GM12878 (cell line): ENCODE measurements at regions of chr4 and their contacts with region 1.

Region 1: GRCh38 chr4:39319678-39320077 is 46.5 kb downstream of the RFC1 start:
- DNase-seq: no peak
- ATAC-seq: no peak
- H3K4me3 ChIP-seq: no peak overlapping the region
- H3K27ac ChIP-seq: no peak overlapping the region
- H3K4me1 ChIP-seq: no peaks in the 10 kb centered on the region
- H3K27me3 ChIP-seq: no peaks in the 10 kb centered on the region
- CTCF ChIP-seq: no peak
- EP300 ChIP-seq: no peak
- POLR2A ChIP-seq: no peak
- RAD21 ChIP-seq: no peak

Region 2: GRCh38 chr4:39181905-39182638 is 137.6 kb before region 1 on chr4 and contains the start of gene WDR19:
- CTCF ChIA-PET with region 1: no interaction called
- POLR2A ChIA-PET with region 1: no interaction called
- RAD21 ChIA-PET with region 1: no interaction called
- SMC1A ChIA-PET with region 1: no interaction called
- in situ Hi-C with region 1: no loop called
- intact Hi-C with region 1: no loop called
- DNase-seq: peak; percentile 98
- ATAC-seq: peak; percentile 99
- H3K4me3 ChIP-seq: peak within 1 kb of the TSS; percentile 88
- H3K27ac ChIP-seq: peak within 1 kb of the TSS; percentile 72
- H3K4me1 ChIP-seq: peaks cover 3% of the 10 kb centered on the region; the same call in 1 of the 2 replicates
- H3K27me3 ChIP-seq: no peaks in the 10 kb centered on the region
- CTCF ChIP-seq: peak; percentile 48 to 59 (median 56)
- EP300 ChIP-seq: 0 out of 4 replicates have a peak, but pooled peaks of 1 of the 2 experiments have one; percentile 16
- POLR2A ChIP-seq: peak; percentile 66
- RAD21 ChIP-seq: peak; percentile 52
- polyA plus RNA-seq, gene WDR19: 3.5 to 6.7 TPM

Region 3: DNA sequence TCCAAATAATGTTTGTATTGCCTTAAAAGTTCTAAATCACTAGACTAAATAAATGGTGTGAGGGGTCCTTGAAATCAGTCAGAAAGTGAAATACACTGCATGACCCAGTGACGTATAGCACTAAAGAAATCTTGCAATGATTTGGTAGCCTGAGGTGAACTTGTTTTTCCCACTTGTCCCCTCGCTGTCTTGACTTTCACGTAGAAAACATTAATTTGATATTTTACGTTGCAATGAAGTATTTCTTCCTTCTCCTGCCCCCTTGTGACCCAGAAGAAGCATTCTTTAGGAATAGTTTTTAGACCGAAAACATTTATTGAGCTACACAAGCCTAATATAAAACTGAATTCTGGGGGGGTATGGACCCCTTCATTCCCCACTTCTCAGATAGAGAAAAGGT is 90.7 kb after region 1 on chr4:
- CTCF ChIA-PET with region 1: no interaction called
- POLR2A ChIA-PET with region 1: no interaction called
- RAD21 ChIA-PET with region 1: no interaction called
- SMC1A ChIA-PET with region 1: interaction called, 4 read pairs
- in situ Hi-C with region 1: no loop called
- intact Hi-C with region 1: loop called (anchors 10 kb)
- DNase-seq: no peak
- ATAC-seq: no peak
- H3K4me3 ChIP-seq: no peak overlapping the region
- H3K27ac ChIP-seq: no peak overlapping the region
- H3K4me1 ChIP-seq: no peaks in the 10 kb centered on the region
- H3K27me3 ChIP-seq: no peaks in the 10 kb centered on the region; a peak in 1 of 4 replicates
- CTCF ChIP-seq: peak; percentile 5 to 29 (median 25); a peak in 2 of 6 replicates
- EP300 ChIP-seq: no peak
- POLR2A ChIP-seq: no peak
- RAD21 ChIP-seq: peak; percentile 27